Posterior cingulate gyrus (tissue), 11 donors: ENCODE measurements at regions of chr11 and their contacts with region 1.

Region 1: DNA sequence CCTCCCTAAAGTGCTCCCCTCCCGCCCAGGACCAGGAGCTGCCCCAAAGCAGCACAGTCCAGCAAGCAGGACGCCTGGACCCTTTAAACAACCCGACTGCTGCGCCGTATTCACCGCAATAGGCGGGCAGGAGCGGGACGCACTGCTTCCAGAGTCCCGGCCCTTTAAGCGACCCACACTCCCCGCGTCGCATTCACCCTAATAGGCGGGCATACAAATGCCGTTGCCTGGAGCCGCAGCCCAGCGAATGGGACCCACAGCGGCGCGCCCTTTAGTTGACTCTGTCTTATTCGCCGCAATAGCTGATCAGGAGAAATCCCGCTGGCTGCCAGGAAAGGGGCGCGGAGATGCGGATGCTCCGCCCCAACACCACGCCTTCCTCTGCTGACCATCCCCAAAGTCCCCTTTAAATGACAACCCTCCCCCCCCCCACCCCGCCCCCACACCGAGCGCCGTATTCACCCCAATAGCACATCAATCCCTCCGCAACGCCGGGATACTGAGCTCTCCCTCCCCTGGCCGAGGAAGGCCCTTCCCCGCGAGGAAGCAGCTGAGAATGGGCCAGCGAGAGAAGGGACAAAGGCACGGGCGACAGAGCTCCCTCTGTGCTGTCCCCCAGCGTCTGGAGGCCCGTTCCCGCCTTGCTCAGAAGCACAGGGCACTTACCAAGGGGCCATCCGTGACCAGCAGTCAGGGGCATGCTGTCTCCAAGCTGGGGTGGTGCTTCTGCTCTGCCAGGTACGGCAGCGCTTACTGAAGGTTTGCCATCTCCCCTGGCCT is 4.7 kb downstream of the OSBPL5 start:
- DNase-seq: peak; percentile 84 to 99 (median 92)

Region 2: GRCh38 chr11:3057069-3057963 is 103.1 kb before region 1 on chr11 and contains the start of gene CARS1:
- intact Hi-C with region 1: loop called (anchors 10 kb)
- DNase-seq: peak; percentile 93 to 100 (median 97)

Region 3: GRCh38 chr11:3091791-3092602 is 68.4 kb before region 1 on chr11:
- intact Hi-C with region 1: no loop called
- DNase-seq: peak in 8 of 10 donors; percentile 45 to 96 (median 72)

Region 4: DNA sequence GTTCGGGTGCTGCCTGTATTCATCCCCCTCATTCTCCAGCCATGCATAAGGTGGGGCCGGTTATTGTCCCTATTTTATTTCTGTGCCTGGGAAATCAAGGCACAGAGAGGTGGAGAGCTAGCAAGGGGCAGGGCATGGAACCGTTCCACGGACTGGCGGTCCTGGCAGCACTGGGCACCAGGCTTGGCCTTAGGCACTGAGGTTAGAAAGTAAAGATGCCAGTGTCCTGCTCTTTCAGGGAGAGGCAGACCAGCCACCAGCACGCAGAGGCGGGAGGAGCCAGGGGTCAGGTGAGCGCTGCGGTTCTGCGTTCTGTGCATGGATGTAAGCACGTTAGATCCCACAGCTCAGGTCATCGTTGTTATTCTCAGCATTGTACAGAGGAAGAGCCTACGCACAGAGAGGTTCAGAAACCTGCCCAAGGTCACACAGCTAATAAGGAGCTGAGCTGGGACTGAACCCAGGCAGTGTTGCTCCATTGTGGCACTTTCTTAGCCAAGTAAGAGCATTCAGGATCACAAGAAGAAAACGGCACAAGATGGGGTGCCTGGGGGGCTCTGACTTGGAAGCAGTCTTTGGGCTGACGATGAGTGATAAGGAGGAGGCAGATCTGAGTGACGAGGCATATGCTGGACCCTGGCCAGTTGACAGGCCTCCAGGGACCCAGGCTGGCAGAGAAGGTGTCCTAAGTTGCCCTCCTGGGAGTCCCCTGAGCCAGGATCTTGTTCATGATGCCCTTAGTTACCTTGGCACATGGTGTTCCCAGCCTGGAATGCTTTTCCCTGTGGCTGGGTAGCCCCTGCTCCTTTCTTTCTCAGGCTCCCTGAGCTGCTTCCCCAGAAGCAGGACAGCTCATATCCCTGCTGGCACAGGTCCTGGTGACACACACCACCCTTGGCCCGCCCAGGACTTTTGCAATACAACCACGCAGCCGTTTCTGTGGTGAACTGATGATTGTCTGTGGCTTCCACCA is 36.4 kb before region 1 on chr11:
- intact Hi-C with region 1: loop called (anchors 5 kb)
- DNase-seq: peak in 9 of 10 donors; percentile 5 to 88 (median 31)